ENCODE measurements at regions of chr5 and their contacts with region 1.

Region 1: GRCh38 chr5:59660737-59661136 is 232.8 kb downstream of the PDE4D start:
- DNase-seq: peak; percentile 36 to 56 (median 54)
- H3K4me3 ChIP-seq: no peak overlapping the region
- H3K27ac ChIP-seq: no peak overlapping the region
- H3K4me1 ChIP-seq: peaks cover 21 to 56% (median 38%) of the 10 kb centered on the region in 4 experiments
- H3K27me3 ChIP-seq: no peaks in the 10 kb centered on the region

Region 2: GRCh38 chr5:59673438-59674058 is 12.8 kb after region 1 on chr5:
- CTCF ChIA-PET with region 1: interaction called, 28 read pairs
- POLR2A ChIA-PET with region 1: no interaction called
- DNase-seq: peak; percentile 38 to 70 (median 63)
- H3K4me3 ChIP-seq: no peak overlapping the region
- H3K27ac ChIP-seq: no peak overlapping the region
- H3K4me1 ChIP-seq: no peaks in the 10 kb centered on the region
- H3K27me3 ChIP-seq: no peaks in the 10 kb centered on the region

Measured in common myeloid progenitor, CD34-positive (primary cell).